ENCODE measurements at regions of chr11 and their contacts with region 1.

Region 1: GRCh38 chr11:2377511-2378443 is 667 bp downstream of the CD81 start:
- DNase-seq: peak; percentile 86
- H3K4me3 ChIP-seq: peak overlapping the region; percentile 99
- H3K27ac ChIP-seq: peak overlapping the region; percentile 89
- H3K4me1 ChIP-seq: peaks cover 21% of the 10 kb centered on the region
- H3K27me3 ChIP-seq: no peaks in the 10 kb centered on the region

Region 2: DNA sequence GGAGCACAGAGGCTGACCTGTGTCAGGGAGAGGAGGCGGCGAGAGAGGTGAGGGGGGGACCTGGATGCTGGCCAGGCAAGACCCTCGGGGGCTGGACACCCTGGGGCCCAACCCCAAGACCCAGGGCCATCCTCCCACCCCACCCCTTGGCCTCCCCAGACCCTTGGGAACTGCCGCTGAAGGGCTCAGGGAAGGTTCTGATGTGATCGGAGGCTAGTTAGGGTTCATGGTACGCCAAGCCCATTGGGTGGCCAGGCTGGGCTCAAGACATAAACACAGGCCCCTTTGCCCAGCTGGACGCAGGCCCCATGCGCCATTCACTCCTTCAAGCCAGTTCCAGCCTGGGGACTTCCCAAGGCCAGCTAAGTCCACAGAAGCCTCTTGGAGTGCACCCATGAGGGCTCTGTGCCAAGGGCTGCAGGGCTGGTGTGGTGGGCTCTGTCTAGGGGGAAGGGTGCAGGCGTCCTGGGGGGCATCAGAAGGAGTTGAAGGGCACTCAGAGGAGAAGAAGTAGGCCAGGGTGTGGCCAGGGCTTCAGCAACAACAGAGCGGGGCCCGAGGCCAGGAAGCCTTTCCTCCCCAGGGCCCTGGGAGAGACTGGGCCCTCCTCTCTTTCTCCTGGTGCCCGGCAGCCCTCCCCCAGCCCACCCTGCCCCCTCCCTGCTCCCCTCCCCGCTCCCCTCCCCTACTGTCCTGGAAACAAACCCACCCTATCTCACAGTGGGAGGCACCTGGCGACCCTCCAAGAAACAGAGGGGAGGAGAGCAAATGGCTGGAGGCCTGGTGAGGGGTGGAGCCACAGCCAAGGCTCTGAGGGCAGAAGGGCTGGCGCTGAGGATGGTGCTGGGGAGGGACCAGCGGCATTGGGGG is 63.0 kb before region 1 on chr11:
- in situ Hi-C with region 1: loop called (anchors 10 kb)
- DNase-seq: peak; percentile 71
- H3K4me3 ChIP-seq: no peak overlapping the region
- H3K27ac ChIP-seq: no peak overlapping the region
- H3K4me1 ChIP-seq: peaks cover 17% of the 10 kb centered on the region
- H3K27me3 ChIP-seq: no peaks in the 10 kb centered on the region

Region 3: DNA sequence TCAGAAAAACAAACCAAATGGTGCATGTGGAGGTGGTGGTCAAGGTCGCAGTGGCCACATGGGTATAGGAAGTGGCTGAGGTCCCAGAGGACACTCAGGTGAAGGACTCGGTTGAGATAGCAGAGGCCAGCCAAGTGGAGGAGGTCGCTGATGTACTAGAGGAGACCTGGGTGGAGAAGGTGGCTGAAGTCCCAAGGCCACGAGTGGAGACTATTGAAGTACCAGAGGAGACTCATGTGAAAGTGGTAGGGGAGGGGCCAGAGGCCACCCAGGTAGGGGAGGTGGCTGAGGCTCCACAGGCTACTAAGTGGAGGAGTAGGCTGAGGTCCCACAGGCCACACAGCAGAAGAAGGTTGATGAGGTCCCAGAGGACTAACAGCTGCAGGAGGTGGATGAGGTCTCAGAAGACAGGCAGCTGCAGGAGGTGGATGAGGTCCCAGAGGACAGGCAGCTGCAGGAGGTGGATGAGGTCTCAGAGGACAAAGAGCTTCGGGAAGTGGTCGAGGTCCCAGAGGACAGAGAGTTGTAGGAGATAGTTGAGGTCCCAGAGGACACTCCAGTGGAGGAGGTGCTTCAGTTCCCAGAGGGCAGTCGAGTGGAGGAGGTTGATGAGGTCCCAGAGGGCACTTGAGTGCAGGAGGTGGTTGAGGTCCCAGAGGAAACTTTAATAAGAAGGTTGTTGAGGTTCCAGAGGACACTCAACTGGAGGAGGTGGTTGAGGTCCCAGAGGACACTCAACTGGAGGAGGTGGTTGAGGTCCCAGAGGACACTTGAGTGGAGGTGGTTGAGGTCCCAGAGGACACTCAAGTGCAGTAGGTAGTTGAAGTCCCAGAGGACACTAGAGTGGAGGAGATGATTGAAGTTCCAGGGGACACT is 961.1 kb after region 1 on chr11:
- in situ Hi-C with region 1: no loop called
- DNase-seq: no peak
- H3K4me3 ChIP-seq: no peak overlapping the region
- H3K27ac ChIP-seq: no peak overlapping the region
- H3K4me1 ChIP-seq: peaks cover 9% of the 10 kb centered on the region
- H3K27me3 ChIP-seq: peaks cover 7% of the 10 kb centered on the region; the same call in 1 of the 2 replicates

Measured in GM23248 (cell line).